ENCODE measurements at regions of chr7 and their contacts with region 1.

Region 1: DNA sequence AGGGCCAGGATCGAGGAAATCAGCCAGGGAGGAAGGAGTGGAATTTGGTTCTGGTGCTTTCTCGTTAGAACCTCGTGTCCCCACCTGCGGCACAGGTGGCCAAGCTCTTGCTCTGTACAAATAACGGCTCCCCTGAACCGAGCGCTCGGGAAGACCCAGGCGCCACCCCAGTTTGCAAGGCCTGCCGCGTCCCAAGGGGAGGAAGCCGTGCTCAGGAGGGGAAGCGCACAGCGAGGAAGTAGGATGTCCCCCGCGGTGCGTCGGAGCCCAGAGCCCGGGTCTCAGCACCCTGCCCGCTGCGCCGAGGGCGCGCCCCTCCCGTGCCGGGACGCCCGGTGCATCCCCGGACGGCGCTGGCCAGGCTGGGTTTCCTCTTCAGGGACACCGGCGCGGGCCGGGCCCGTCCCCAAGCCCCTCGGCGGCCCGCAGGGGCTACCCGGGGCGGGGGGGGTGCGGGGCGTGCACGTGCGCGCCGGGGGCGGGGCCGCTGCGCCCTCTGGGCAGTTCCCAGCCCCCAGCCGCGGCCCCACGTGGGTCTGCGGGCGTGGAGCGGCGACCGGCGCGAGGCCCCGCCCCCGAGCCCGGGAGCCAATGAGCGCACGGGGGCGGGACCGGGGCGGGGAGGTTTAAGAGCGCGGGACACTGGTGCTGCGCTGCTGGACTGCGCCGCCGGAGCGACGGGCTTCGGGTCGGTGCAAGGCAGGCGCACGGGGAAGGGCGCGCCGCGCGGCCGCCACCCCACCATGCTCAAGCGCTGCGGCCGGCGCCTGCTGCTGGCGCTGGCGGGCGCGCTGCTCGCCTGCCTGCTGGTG is at the start of gene LFNG:
- DNase-seq: peak; percentile 96
- ATAC-seq: peak; percentile 69
- H3K4me3 Mint-ChIP-seq: peak within 1 kb of the TSS; percentile 97
- H3K27ac Mint-ChIP-seq: peak within 1 kb of the TSS; percentile 90
- H3K4me1 Mint-ChIP-seq: peaks cover 12% of the 10 kb centered on the region
- H3K27me3 Mint-ChIP-seq: no peaks in the 10 kb centered on the region
- total RNA-seq, gene LFNG: 115 to 121 TPM

Region 2: DNA sequence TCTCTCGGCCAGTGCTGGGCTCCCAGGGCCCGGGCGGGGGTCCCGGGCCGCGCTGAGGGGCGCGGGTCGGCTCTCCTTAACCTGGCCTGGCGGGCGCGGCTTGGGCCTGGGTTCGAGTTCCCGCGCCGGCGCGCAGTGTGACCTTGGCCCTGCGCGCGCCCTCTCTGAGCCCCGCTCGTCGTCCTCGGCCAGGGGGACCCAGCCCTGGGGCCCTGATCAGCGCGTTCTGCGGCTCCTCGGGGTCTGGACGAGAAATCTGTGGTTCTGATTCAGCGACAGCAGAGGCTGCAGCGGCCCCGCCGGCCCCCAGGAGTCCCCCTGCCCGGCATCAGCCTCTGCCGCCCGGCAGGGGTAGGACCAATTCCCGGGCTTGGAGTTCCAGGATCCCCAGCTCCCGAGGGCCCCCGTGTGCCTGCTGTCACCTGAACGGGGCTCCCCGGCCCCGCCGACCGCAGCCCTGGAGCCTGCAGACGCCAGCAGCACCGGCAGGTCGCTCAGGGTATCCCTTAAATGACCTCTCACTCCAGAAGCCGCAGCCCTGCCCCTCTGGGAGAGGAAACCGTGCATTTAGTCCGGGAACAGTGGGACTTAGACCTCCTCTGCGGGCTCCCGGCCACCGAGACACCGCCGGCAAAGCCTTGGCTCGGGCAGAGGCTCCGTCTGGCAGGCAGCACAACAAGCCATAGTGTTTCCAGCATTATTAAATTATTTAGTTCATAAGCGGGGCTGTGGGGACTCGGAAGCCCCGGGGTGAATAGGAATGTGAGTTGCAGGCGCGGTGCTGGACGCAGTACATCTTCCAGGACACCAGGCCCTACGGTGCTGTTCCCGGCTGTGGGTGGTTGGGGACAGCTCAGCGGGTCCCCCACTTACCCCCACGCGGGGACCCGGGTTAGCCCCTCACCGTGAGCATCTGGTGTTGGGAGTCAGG is 115.3 kb before region 1 on chr7:
- POLR2A ChIA-PET with region 1: interaction called, 11 read pairs
- DNase-seq: peak; percentile 61
- ATAC-seq: peak; percentile 21
- H3K4me3 Mint-ChIP-seq: peak overlapping the region; percentile 89
- H3K27ac Mint-ChIP-seq: peak overlapping the region; percentile 99
- H3K4me1 Mint-ChIP-seq: peaks cover 52% of the 10 kb centered on the region
- H3K27me3 Mint-ChIP-seq: no peaks in the 10 kb centered on the region

Region 3: GRCh38 chr7:2508327-2509215 is 10.8 kb before region 1 on chr7:
- POLR2A ChIA-PET with region 1: interaction called, 207 read pairs
- DNase-seq: peak; percentile 79
- ATAC-seq: peak; percentile 70
- H3K4me3 Mint-ChIP-seq: peak overlapping the region; percentile 77
- H3K27ac Mint-ChIP-seq: peak overlapping the region; percentile 94
- H3K4me1 Mint-ChIP-seq: peaks cover 37% of the 10 kb centered on the region
- H3K27me3 Mint-ChIP-seq: no peaks in the 10 kb centered on the region

Region 4: GRCh38 chr7:2529161-2530070 is 10.1 kb after region 1 on chr7:
- POLR2A ChIA-PET with region 1: interaction called, 38 read pairs
- DNase-seq: peak; percentile 71
- ATAC-seq: peak; percentile 48
- H3K4me3 Mint-ChIP-seq: peak overlapping the region; percentile 83
- H3K27ac Mint-ChIP-seq: peak overlapping the region; percentile 87
- H3K4me1 Mint-ChIP-seq: peaks cover 34% of the 10 kb centered on the region
- H3K27me3 Mint-ChIP-seq: no peaks in the 10 kb centered on the region